ENCODE measurements at regions of chr17 and their contacts with region 1.

Region 1: DNA sequence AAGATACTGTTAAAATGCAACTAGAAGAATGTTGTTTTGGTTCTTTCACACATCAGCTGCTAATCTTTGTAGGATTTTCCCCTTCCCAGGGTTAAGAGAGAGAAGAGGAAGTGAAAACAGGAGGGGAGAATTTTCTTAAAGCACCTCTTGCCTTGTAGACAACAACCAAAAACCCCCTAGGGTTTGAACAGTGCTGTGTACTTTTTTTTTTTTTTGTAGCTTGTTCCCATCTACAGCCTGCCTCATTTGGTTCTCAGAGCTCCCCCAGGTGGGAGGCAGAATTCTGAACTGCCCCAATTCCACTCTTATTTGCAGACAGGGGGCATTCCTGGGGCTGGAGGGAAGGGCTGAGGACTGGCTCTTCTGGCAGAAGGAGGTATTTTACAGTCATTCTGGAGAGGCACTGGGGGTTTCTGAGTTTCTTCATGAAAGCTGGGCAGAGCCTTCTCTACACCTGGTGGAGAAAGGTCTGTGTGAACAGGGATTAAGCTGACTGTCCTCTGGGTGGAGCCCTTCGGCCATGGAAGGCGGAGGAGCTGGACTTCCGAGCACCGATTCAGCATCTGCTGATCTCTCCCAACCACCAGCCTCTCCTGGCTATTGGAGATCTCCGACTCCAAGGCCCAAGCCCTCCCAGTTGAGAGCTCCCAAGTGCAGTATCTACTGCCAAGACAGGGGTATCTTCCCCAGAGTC is 32.2 kb downstream of the SMARCE1 start:
- DNase-seq: peak in 3 of 5 donors; percentile 41 to 79 (median 57)
- H3K4me3 ChIP-seq: peak overlapping the region; percentile 25
- H3K4me3 Mint-ChIP-seq: peak overlapping the region in 5 of 7 donors; percentile 33 to 66 (median 49)
- H3K27ac ChIP-seq: no peak overlapping the region
- H3K27ac Mint-ChIP-seq: peak overlapping the region in 7 of 8 donors; percentile 26 to 93 (median 88)
- H3K4me1 ChIP-seq: peaks cover 74% of the 10 kb centered on the region
- H3K4me1 Mint-ChIP-seq: peaks cover 39 to 74% (median 68%) of the 10 kb centered on the region in 3 donors
- H3K27me3 ChIP-seq: peaks cover 2% of the 10 kb centered on the region
- H3K27me3 Mint-ChIP-seq: peaks cover 0 to 2% of the 10 kb centered on the region in 2 donors

Region 2: GRCh38 chr17:40568074-40568836 is 47.2 kb before region 1 on chr17:
- CTCF ChIA-PET with region 1: interaction called, 108 read pairs
- POLR2A ChIA-PET with region 1: interaction called, 6 read pairs
- DNase-seq: no peak
- H3K4me3 ChIP-seq: no peak overlapping the region
- H3K4me3 Mint-ChIP-seq: peak overlapping the region in 1 of 7 donors; percentile 26
- H3K27ac ChIP-seq: no peak overlapping the region
- H3K27ac Mint-ChIP-seq: peak overlapping the region in 3 of 8 donors; percentile 36 to 79 (median 61)
- H3K4me1 ChIP-seq: peaks cover 61% of the 10 kb centered on the region
- H3K4me1 Mint-ChIP-seq: peaks cover 45 to 66% (median 55%) of the 10 kb centered on the region in 3 donors
- H3K27me3 ChIP-seq: no peaks in the 10 kb centered on the region
- H3K27me3 Mint-ChIP-seq: peaks cover 0 to 1% of the 10 kb centered on the region in 2 donors

Region 3: GRCh38 chr17:40602775-40603551 is 12.5 kb before region 1 on chr17:
- CTCF ChIA-PET with region 1: interaction called, 20 read pairs
- POLR2A ChIA-PET with region 1: interaction called, 5 read pairs
- DNase-seq: peak in 3 of 5 donors; percentile 65 to 91 (median 68)
- H3K4me3 ChIP-seq: peak overlapping the region; percentile 39
- H3K4me3 Mint-ChIP-seq: peak overlapping the region; percentile 7 to 83 (median 73)
- H3K27ac ChIP-seq: peak overlapping the region; percentile 41
- H3K27ac Mint-ChIP-seq: peak overlapping the region; percentile 96 to 100 (median 97)
- H3K4me1 ChIP-seq: peaks cover 100% of the 10 kb centered on the region
- H3K4me1 Mint-ChIP-seq: peaks cover 84 to 99% (median 99%) of the 10 kb centered on the region in 3 donors
- H3K27me3 ChIP-seq: no peaks in the 10 kb centered on the region
- H3K27me3 Mint-ChIP-seq: peaks cover 0 to 4% of the 10 kb centered on the region in 2 donors

Region 4: GRCh38 chr17:40827746-40828453 is 212.5 kb after region 1 on chr17:
- CTCF ChIA-PET with region 1: no interaction called
- POLR2A ChIA-PET with region 1: no interaction called
- DNase-seq: no peak
- H3K4me3 ChIP-seq: no peak overlapping the region
- H3K4me3 Mint-ChIP-seq: no peak overlapping the region
- H3K27ac ChIP-seq: no peak overlapping the region
- H3K27ac Mint-ChIP-seq: peak overlapping the region in 2 of 8 donors; percentile 7 to 29
- H3K4me1 ChIP-seq: no peaks in the 10 kb centered on the region
- H3K4me1 Mint-ChIP-seq: peaks cover 0 to 12% (median 6%) of the 10 kb centered on the region in 3 donors
- H3K27me3 ChIP-seq: no peaks in the 10 kb centered on the region
- H3K27me3 Mint-ChIP-seq: peaks cover 0 to 36% of the 10 kb centered on the region in 2 donors